ENCODE measurements at regions of chr1 and their contacts with region 1.

Region 1: DNA sequence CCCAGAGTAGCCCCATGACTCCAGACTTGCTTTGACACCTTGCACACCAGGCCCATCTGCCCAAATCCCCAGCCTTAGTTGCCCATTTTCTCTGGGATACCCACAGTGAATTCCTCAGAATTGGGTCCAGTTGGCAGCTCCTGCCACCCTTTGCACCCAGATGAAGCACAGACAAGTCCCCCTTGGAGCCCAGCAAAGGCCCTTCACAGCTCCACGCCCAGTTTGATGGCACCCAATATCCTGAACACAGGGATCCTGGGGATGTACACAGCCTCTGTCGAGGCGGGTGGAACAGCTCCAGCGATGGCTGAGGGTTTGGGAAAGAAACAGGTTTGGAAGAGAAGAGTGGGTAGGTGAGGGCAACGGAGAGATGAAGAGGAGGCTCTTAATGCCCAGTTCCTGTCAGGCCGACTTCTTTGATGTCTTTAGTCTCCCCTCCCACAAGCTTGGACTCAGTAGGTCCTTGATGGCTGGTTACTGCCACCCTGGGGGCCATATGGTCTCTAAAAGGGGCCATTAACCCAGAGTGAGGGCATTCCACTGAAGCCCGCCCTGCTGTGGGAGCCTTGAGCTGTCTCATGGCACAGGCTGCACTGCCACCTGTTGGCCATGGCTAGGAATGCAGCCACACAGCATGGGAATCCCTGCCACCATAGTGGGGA is 21.7 kb downstream of the TMEM53 start:
- DNase-seq: peak; percentile 50 to 79
- H3K4me3 ChIP-seq: no peak overlapping the region
- H3K27ac ChIP-seq: no peak overlapping the region
- H3K4me1 ChIP-seq: no peaks in the 10 kb centered on the region
- H3K27me3 ChIP-seq: no peaks in the 10 kb centered on the region
- CTCF ChIP-seq: peak; percentile 95

Region 2: DNA sequence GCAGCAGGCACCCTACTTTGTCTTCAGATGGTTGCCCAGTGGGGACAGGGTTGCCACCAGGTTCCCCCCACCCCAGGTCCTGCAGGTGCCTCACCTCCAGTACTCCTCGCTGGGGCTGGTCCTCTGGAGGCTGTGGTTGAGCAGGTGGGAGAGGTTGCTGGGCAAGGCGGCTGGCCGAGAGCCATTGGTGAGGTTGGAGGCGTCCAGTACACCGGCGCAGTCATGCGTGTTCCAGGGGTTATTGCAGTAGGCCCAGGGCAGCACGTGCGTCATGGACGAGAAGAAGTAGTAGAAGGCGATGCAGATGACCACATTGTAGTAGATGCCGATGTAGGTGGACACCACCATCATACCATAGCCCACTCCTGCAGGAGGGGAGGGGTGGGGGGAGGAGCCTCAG is 644.3 kb before region 1 on chr1:
- CTCF ChIA-PET with region 1: no interaction called
- POLR2A ChIA-PET with region 1: no interaction called
- intact Hi-C with region 1: loop called (anchors 5 kb)
- DNase-seq: no peak
- H3K4me3 ChIP-seq: no peak overlapping the region
- H3K27ac ChIP-seq: no peak overlapping the region
- H3K4me1 ChIP-seq: no peaks in the 10 kb centered on the region
- H3K27me3 ChIP-seq: no peaks in the 10 kb centered on the region
- CTCF ChIP-seq: no peak

Region 3: GRCh38 chr1:44213222-44214112 is 439.1 kb before region 1 on chr1 and contains the start of gene DMAP1:
- CTCF ChIA-PET with region 1: interaction called, 8 read pairs
- POLR2A ChIA-PET with region 1: no interaction called
- intact Hi-C with region 1: loop called (anchors 1 kb)
- DNase-seq: peak; percentile 65 to 80
- H3K4me3 ChIP-seq: peak within 1 kb of the TSS; percentile 86
- H3K27ac ChIP-seq: peak within 1 kb of the TSS; percentile 27; the same call in 1 of the 2 replicates
- H3K4me1 ChIP-seq: peaks cover 17% of the 10 kb centered on the region; the same call in 1 of the 2 replicates
- H3K27me3 ChIP-seq: no peaks in the 10 kb centered on the region
- CTCF ChIP-seq: no peak
- total RNA-seq, gene DMAP1: 54.2 and 68.4 TPM in 2 replicates

Region 4: DNA sequence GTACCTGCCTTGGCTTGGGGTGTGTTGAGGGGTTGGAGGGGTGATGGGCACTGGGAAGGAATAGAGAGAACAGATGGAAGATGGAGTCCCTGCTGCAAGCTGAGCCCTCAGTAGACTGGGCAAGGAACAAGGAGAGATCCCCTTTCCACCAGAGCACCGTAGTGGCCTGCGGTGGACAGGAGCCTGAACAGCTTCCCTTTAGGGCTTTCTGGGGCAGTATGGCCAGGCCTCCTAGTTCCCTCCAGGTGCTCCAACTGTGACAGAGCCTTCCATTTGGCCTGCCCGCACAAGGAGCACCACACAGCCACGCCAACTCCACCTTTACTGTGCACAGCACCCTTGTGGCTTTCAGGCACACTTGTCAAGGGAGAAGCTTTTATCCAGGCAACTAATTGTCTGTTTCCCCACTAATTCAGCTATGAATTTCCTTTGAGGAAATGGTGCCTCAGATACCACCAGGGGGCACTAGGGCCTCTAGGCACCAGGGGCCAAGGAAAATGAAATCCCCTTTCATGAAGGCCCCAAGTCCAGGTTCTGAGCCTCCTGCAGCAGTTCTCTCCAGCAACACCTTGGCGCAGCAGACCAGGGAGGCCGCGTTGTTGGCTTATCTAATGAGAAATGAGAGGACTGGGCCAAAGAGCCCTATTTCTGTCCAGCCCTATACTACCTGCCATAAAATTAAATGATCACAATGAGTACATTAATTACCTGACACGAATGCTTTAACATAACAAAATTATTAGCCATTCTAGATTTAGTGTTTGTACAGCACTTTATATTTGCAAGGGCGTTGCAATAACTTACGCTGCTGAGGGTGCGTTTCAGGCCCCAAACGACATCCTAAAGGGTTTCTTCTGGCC is 274.4 kb before region 1 on chr1:
- CTCF ChIA-PET with region 1: interaction called, 13 read pairs
- POLR2A ChIA-PET with region 1: no interaction called
- intact Hi-C with region 1: loop called (anchors 1 kb)
- DNase-seq: peak in 1 of 2 experiments; percentile 61
- H3K4me3 ChIP-seq: no peak overlapping the region
- H3K27ac ChIP-seq: no peak overlapping the region
- H3K4me1 ChIP-seq: no peaks in the 10 kb centered on the region
- H3K27me3 ChIP-seq: no peaks in the 10 kb centered on the region
- CTCF ChIP-seq: peak; percentile 78

Region 5: DNA sequence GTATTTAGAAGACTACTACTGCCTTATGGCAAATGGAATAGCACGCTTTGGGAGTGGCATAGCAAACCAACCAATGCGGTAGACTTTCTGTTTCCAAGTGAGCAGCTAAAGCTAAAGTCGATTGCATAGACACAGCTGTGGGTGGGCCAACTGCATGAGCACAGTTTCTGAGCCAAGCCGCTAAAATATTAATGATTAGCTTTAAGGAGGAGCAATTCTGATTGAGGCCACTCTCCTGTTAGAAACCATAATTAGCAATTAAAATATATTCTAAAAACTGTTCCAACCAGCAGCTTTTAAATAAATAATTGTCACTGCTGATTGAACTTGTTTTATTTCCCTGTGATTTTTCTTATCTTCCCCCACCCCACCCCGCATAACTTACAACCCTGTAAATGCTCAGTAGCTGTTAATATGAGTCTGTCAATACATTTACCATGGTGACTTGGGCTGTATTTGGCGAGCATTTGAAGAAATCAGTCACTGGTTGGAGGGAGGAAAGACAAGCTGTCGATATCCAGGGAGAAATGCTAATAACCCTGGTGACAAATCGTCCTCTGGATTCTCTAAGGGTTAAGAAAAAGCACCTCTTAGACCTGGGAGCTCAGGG is 215.4 kb before region 1 on chr1:
- CTCF ChIA-PET with region 1: no interaction called
- POLR2A ChIA-PET with region 1: no interaction called
- intact Hi-C with region 1: no loop called
- DNase-seq: no peak
- H3K4me3 ChIP-seq: no peak overlapping the region
- H3K27ac ChIP-seq: no peak overlapping the region
- H3K4me1 ChIP-seq: no peaks in the 10 kb centered on the region
- H3K27me3 ChIP-seq: no peaks in the 10 kb centered on the region
- CTCF ChIP-seq: no peak

Region 6: DNA sequence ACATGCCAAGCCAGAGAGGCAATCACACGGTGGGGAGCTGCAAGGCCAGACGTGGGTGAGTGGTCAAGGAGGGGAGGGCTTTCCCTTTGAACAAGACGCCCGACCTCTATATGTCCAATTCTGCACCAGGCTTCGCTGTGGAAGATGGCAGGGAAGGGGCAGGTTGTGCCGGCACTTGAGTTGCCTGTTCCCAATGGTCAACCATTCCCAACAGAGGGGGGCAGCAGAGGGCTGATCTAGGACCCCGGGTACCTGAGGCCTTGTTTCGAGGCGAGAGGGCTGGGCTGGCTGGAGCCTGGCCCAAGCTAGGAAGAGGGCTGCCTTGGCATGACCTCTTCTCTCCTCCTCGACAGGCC is 43.2 kb before region 1 on chr1:
- CTCF ChIA-PET with region 1: interaction called, 7 read pairs
- POLR2A ChIA-PET with region 1: no interaction called
- intact Hi-C with region 1: loop called (anchors 2 kb)
- DNase-seq: peak in 1 of 2 experiments; percentile 49
- H3K4me3 ChIP-seq: no peak overlapping the region
- H3K27ac ChIP-seq: no peak overlapping the region
- H3K4me1 ChIP-seq: no peaks in the 10 kb centered on the region
- H3K27me3 ChIP-seq: no peaks in the 10 kb centered on the region
- CTCF ChIP-seq: peak; percentile 56

Region 7: GRCh38 chr1:44621841-44622286 is 30.7 kb before region 1 on chr1:
- CTCF ChIA-PET with region 1: no interaction called
- POLR2A ChIA-PET with region 1: no interaction called
- intact Hi-C with region 1: no loop called
- DNase-seq: no peak
- H3K4me3 ChIP-seq: no peak overlapping the region
- H3K27ac ChIP-seq: no peak overlapping the region
- H3K4me1 ChIP-seq: no peaks in the 10 kb centered on the region
- H3K27me3 ChIP-seq: no peaks in the 10 kb centered on the region
- CTCF ChIP-seq: no peak

Region 8: GRCh38 chr1:44707959-44708831 is 55.6 kb after region 1 on chr1:
- CTCF ChIA-PET with region 1: no interaction called
- POLR2A ChIA-PET with region 1: interaction called, 14 read pairs
- intact Hi-C with region 1: loop called (anchors 1 kb)
- DNase-seq: peak in 1 of 2 experiments; percentile 65
- H3K4me3 ChIP-seq: peak overlapping the region; percentile 8; the same call in 1 of the 2 replicates
- H3K27ac ChIP-seq: peak overlapping the region; percentile 85
- H3K4me1 ChIP-seq: peaks cover 56% of the 10 kb centered on the region
- H3K27me3 ChIP-seq: no peaks in the 10 kb centered on the region
- CTCF ChIP-seq: peak; percentile 59

Region 9: DNA sequence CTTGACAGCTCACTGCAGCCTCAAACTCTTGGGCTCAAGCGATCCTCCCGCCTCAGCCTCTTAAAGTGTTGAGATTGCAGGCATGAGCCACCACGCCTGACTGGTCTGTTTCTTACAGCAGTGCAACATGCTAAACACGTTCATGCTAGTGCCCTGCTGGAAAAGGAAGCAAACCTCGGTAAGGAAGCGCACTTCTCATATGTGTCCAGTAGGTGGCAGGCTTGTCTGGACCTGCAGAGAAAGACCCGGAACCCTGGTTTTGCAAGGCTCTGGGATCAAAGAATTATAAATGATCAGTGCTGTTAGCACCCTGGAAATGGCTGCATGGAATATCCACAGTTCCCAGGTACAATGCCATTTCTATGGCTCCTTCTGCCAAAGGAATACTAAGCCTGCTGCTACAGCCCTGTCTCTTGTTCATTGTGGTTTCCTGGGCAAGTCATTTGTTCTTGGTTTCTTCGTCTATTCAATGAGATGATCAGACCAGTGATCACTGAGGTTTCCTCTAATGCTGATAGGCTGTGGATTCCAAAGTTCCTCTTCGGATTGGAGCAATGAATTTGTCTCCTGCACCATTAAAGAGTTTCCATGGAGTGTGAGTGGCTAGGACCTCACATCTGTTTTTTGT is 62.5 kb after region 1 on chr1:
- CTCF ChIA-PET with region 1: interaction called, 3 read pairs
- POLR2A ChIA-PET with region 1: no interaction called
- intact Hi-C with region 1: loop called (anchors 1 kb)
- DNase-seq: peak; percentile 64 to 69
- H3K4me3 ChIP-seq: no peak overlapping the region
- H3K27ac ChIP-seq: no peak overlapping the region
- H3K4me1 ChIP-seq: peaks cover 21% of the 10 kb centered on the region
- H3K27me3 ChIP-seq: no peaks in the 10 kb centered on the region
- CTCF ChIP-seq: peak; percentile 91

Region 10: DNA sequence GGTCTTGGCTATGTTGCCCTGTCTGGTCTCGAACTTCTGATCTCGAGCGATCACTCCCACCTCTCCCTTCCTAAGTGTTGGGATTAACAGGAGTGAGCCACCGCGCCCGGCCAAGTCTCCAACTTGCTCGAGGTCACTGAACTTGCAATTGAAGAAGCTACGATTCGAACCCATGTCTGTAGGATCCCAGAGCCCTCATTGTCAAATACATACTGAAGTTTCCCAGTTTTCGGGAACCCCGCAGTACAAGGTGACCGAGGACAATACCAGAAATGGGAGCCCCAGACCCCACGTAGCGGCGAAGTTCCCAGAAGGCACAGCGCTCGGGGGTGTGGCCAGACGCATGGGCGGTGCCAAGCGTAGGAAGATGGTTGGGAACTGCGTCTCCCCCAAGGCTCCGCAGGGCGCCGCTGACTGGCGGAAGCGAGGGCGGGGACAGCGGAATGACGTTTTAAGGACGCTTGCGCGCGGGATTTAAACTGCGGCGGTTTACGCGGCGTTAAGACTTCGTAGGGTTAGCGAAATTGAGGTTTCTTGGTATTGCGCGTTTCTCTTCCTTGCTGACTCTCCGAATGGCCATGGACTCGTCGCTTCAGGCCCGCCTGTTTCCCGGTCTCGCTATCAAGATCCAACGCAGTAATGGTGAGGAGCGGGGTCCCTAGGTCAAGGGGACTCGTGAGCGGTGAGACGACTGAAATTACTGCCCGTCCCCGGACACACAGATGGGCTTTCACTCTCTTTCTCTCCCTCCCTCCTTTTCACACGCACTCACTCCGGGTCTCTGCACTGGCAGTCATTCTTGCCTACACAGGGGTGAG is 87.0 kb after region 1 on chr1 and contains the start of gene KIF2C:
- CTCF ChIA-PET with region 1: no interaction called
- POLR2A ChIA-PET with region 1: no interaction called
- intact Hi-C with region 1: no loop called
- DNase-seq: peak; percentile 92 to 98
- H3K4me3 ChIP-seq: peak within 1 kb of the TSS; percentile 65
- H3K27ac ChIP-seq: peak within 1 kb of the TSS; percentile 79
- H3K4me1 ChIP-seq: peaks cover 18% of the 10 kb centered on the region
- H3K27me3 ChIP-seq: no peaks in the 10 kb centered on the region
- CTCF ChIP-seq: 0 out of 2 replicates have a peak, but pooled peaks have one; percentile 16
- total RNA-seq, gene KIF2C: 103 and 119 TPM in 2 replicates

Region 11: GRCh38 chr1:45230540-45230939 is 578.0 kb after region 1 on chr1:
- CTCF ChIA-PET with region 1: no interaction called
- POLR2A ChIA-PET with region 1: no interaction called
- intact Hi-C with region 1: no loop called
- DNase-seq: no peak
- H3K4me3 ChIP-seq: no peak overlapping the region
- H3K27ac ChIP-seq: no peak overlapping the region
- H3K4me1 ChIP-seq: no peaks in the 10 kb centered on the region
- H3K27me3 ChIP-seq: no peaks in the 10 kb centered on the region
- CTCF ChIP-seq: peak; percentile 46; the same call in 1 of the 2 replicates